Left lung (tissue), 14 donors: ENCODE measurements at regions of chr15 and their contacts with region 1.

Region 1: DNA sequence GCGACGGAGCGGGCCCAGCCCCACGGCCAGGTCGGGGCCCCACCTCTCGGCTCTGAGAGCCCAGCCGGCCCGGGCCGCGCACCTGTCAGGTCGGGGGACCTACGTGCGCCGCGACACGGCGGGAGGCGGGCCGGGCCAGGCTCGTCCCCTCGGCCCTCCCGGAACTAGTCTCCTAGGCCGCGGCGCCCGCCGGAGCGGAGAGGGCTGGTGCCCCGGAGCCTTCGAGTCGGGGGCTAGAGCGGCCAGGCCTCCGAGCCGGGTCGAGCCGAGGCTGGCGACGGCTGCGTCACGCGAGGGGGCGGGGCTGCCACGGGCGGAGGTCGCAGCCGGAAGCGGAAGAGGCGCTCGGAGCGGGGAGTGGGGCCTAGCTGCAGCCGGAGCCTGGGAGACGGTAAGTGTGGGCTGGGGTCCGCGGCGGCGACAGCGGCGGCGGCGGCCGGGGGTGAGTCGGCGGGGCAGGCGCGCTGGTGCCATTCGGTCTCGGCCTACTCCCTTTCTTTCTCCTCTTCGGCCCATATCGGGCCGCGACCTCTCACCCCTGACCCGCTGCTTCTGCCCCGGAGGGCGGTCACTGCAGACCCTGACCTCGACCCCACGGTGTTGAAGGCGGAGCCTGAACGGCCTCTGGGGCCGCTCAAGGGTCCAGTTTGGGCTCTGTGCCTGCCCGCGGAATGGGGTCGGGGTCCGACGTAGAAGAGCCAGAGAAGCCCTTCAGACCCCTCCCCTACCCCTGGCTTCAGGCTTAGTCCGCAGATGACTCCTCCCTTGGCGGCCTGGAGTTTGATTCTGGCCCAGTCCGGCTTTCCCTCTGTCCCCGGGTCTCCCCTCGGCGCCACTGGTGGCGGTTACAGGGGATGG is at the start of gene CLK3:
- DNase-seq: peak; percentile 90 to 100 (median 97)
- ATAC-seq: peak; percentile 89
- H3K4me3 ChIP-seq: peak within 1 kb of the TSS; percentile 99 to 100
- H3K27ac ChIP-seq: peak within 1 kb of the TSS; percentile 94 to 97
- H3K4me1 ChIP-seq: peaks cover 20 to 44% of the 10 kb centered on the region in 2 donors
- H3K27me3 ChIP-seq: no peaks in the 10 kb centered on the region
- CTCF ChIP-seq: no peak
- polyA plus RNA-seq, gene CLK3: 69.1 to 91.0 (median 81.8) TPM

Region 2: GRCh38 chr15:74540761-74541493 is 74.8 kb before region 1 on chr15 and contains the start of gene ARID3B:
- intact Hi-C with region 1: loop called in 1 of 2 experiments (anchors 10 kb)
- DNase-seq: peak; percentile 92 to 98 (median 98)
- ATAC-seq: peak; percentile 97
- H3K4me3 ChIP-seq: peak within 1 kb of the TSS; percentile 83 to 87
- H3K27ac ChIP-seq: peak within 1 kb of the TSS; percentile 58 to 89
- H3K4me1 ChIP-seq: peaks cover 19 to 40% of the 10 kb centered on the region in 2 donors
- H3K27me3 ChIP-seq: no peaks in the 10 kb centered on the region
- CTCF ChIP-seq: no peak
- polyA plus RNA-seq, gene ARID3B: 9.3 to 11.4 (median 11.1) TPM

Region 3: GRCh38 chr15:74808073-74808755 is 192.5 kb after region 1 on chr15:
- intact Hi-C with region 1: no loop called
- DNase-seq: peak in 2 of 4 donors; percentile 59 to 80
- ATAC-seq: peak; percentile 91
- H3K4me3 ChIP-seq: no peak overlapping the region
- H3K27ac ChIP-seq: no peak overlapping the region
- H3K4me1 ChIP-seq: no peaks in the 10 kb centered on the region
- H3K27me3 ChIP-seq: no peaks in the 10 kb centered on the region
- CTCF ChIP-seq: no peak